ENCODE measurements at regions of chr9 and their contacts with region 1.

Region 1: DNA sequence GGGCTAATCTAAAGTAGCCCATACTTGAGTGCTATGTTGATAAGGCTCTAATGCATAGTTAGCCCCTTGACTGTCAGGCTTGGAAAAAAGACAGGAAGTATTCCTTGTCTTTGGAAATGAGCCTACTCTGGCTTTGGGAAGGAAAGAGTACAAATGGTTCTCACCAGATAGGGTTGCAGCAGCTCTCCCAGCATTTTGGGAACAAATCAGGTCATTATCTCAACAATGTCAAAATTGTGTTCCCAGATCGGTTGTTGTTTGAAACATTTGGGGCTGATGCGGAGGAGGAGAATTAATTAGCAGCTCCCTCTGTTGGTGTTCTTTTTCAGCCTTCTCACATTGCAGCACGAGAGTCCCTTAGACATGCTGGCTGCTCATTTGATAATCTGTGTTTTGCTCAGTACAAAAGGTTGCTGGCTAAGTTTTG is 294.7 kb upstream of the DMRT1 start:
- DNase-seq: no peak
- H3K4me3 ChIP-seq: peak overlapping the region; percentile 4 to 19 (median 9)
- H3K27ac ChIP-seq: peak overlapping the region in 3 of 4 donors; percentile 25 to 70 (median 52)
- H3K4me1 ChIP-seq: peaks cover 23 to 31% (median 28%) of the 10 kb centered on the region in 4 donors
- H3K27me3 ChIP-seq: no peaks in the 10 kb centered on the region
- CTCF ChIP-seq: peak; percentile 38 to 49 (median 47)
- EP300 ChIP-seq: no peak
- POLR2A ChIP-seq: no peak

Region 2: GRCh38 chr9:406886-407654 is 139.7 kb before region 1 on chr9:
- intact Hi-C with region 1: loop called (anchors 10 kb)
- DNase-seq: no peak
- H3K4me3 ChIP-seq: no peak overlapping the region
- H3K27ac ChIP-seq: no peak overlapping the region
- H3K4me1 ChIP-seq: no peaks in the 10 kb centered on the region
- H3K27me3 ChIP-seq: no peaks in the 10 kb centered on the region
- CTCF ChIP-seq: no peak
- EP300 ChIP-seq: no peak
- POLR2A ChIP-seq: no peak

Region 3: GRCh38 chr9:503881-504852 is 42.6 kb before region 1 on chr9:
- intact Hi-C with region 1: loop called (anchors 5 kb)
- DNase-seq: no peak
- H3K4me3 ChIP-seq: peak within 1 kb of the TSS; percentile 75 to 87 (median 82)
- H3K27ac ChIP-seq: peak within 1 kb of the TSS; percentile 82 to 88 (median 86)
- H3K4me1 ChIP-seq: peaks cover 8 to 30% (median 24%) of the 10 kb centered on the region in 4 donors
- H3K27me3 ChIP-seq: no peaks in the 10 kb centered on the region
- CTCF ChIP-seq: peak; percentile 35 to 55 (median 36)
- EP300 ChIP-seq: no peak
- POLR2A ChIP-seq: no peak

Region 4: GRCh38 chr9:581673-582497 is 35.1 kb after region 1 on chr9:
- intact Hi-C with region 1: no loop called
- DNase-seq: no peak
- H3K4me3 ChIP-seq: no peak overlapping the region
- H3K27ac ChIP-seq: no peak overlapping the region
- H3K4me1 ChIP-seq: peaks cover 0 to 3% (median 0%) of the 10 kb centered on the region in 4 donors
- H3K27me3 ChIP-seq: no peaks in the 10 kb centered on the region
- CTCF ChIP-seq: no peak
- EP300 ChIP-seq: no peak
- POLR2A ChIP-seq: no peak

Measured in esophagus muscularis mucosa (tissue), 4 donors.